ENCODE measurements at regions of chr11 and their contacts with region 1.

Region 1: DNA sequence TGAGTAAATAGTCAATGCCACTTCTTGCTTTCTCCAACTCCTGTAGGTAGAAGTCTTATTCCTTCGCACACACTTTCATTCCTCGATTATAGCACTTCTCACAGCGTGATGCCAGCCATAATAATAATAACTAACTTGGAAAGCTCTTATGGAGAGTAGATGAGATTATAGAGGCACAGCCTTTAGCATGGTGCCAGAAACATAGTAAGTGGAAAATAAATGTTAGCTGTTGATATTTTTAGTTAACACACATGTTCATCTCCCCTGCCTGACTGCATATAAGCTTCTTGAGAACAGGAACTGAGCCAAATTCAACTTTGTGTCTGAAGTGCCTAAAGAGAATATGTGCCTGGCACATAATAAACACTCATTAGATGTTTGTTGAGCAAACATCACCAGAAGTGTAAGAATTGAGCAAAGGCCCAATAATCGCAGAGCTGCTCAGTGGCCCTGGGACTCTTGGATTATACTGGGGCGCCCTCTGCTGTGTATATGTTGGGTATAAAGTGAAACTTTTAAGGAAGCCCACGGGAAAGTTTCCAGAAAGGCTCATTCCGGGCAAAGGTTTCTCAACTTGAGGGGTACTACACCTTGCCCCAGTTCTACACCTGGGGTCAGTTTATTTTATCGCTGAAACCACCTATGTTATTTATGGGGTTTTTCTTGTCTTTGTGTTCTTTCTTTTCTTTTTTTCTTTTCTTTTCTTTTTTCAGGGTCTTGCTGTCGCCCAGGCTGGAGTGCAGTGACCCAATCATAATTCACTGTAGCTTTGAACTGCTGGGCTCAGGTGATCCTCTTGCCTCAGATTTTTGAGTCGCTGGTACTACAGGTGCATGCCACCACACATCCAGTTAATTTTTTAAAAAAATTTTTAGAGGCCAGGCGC is 22.3 kb downstream of the SLN start:
- DNase-seq: peak; percentile 68
- H3K4me3 ChIP-seq: no peak overlapping the region
- H3K27ac ChIP-seq: no peak overlapping the region
- H3K4me1 ChIP-seq: peaks cover 0 to 4% (median 0%) of the 10 kb centered on the region in 4 donors
- H3K27me3 ChIP-seq: peaks cover 29% of the 10 kb centered on the region
- CTCF ChIP-seq: peak; percentile 58 to 62 (median 59)
- EP300 ChIP-seq: no peak
- POLR2A ChIP-seq: no peak

Region 2: DNA sequence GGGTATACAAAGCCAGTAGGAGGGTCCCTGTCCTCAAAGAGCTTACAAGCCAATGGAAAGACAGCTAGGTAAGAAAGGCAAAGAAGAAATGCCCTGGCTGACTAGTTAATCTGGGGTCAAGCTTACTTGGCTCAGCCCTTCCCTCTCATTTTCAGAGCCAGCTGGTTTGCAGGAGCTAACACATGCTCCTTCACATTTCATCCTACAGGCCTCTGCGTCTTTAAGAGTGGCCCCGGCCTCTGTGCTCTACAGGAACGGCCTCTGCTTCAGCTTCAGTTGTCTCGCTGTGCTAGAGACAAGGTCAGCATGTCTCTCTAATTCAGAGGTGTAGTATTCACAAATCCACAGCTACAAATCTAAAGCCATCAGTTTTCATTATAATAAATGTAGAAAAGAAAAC is 139.3 kb before region 1 on chr11:
- in situ Hi-C with region 1: loop called in 1 of 4 experiments (anchors 10 kb)
- intact Hi-C with region 1: no loop called
- DNase-seq: no peak
- H3K4me3 ChIP-seq: no peak overlapping the region
- H3K27ac ChIP-seq: no peak overlapping the region
- H3K4me1 ChIP-seq: no peaks in the 10 kb centered on the region
- H3K27me3 ChIP-seq: no peaks in the 10 kb centered on the region
- CTCF ChIP-seq: no peak
- EP300 ChIP-seq: no peak
- POLR2A ChIP-seq: no peak

Region 3: GRCh38 chr11:107577346-107577711 is 112.2 kb before region 1 on chr11:
- in situ Hi-C with region 1: loop called in 3 of 4 experiments (anchors 5 to 25 kb)
- intact Hi-C with region 1: loop called (anchors 5 kb)
- DNase-seq: no peak
- H3K4me3 ChIP-seq: no peak overlapping the region
- H3K27ac ChIP-seq: no peak overlapping the region
- H3K4me1 ChIP-seq: no peaks in the 10 kb centered on the region
- H3K27me3 ChIP-seq: no peaks in the 10 kb centered on the region
- CTCF ChIP-seq: no peak
- EP300 ChIP-seq: no peak
- POLR2A ChIP-seq: no peak

Region 4: GRCh38 chr11:107590460-107591377 is 98.8 kb before region 1 on chr11 and contains the start of gene ELMOD1:
- in situ Hi-C with region 1: loop called in 2 of 4 experiments (anchors 25 kb)
- intact Hi-C with region 1: no loop called
- DNase-seq: peak; percentile 19
- H3K4me3 ChIP-seq: peak within 1 kb of the TSS; percentile 27 to 68 (median 46)
- H3K27ac ChIP-seq: no peak within 1 kb of the TSS
- H3K4me1 ChIP-seq: peaks cover 3 to 19% (median 15%) of the 10 kb centered on the region in 4 donors
- H3K27me3 ChIP-seq: peaks cover 82% of the 10 kb centered on the region
- CTCF ChIP-seq: no peak
- EP300 ChIP-seq: no peak
- POLR2A ChIP-seq: no peak
- total RNA-seq, gene ELMOD1: 0.16 to 0.27 TPM in 2 of 4 donors, not detected in the others